ENCODE measurements at regions of chr9 and their contacts with region 1.

Region 1: GRCh38 chr9:32741706-32742105 is 41.6 kb upstream of the TMEM215 start:
- DNase-seq: peak; percentile 55
- H3K4me3 ChIP-seq: no peak overlapping the region
- H3K27ac ChIP-seq: peak overlapping the region; percentile 16
- H3K4me1 ChIP-seq: peaks cover 32% of the 10 kb centered on the region
- H3K27me3 ChIP-seq: no peaks in the 10 kb centered on the region
- CTCF ChIP-seq: no peak

Region 2: DNA sequence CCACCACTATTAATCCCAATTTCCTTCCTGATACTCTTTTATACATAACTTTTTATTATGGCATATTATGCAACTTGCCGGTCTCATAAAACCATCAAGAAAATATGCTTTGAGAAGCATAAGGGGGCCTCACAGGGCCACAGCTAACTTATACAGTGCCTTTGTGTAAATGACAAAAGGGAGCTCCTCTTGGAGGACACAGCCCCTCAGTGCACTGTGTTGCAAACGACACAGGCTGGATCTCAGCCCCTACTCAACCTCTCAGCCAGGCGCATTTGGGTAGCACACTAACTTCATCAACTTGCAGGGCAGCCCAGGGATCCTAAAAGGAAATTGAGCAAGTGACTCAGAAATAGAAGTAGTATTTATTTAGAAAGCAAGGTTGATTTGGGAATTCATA is 251.1 kb before region 1 on chr9:
- CTCF ChIA-PET with region 1: no interaction called
- dilution Hi-C with region 1: no loop called
- in situ Hi-C with region 1: no loop called
- intact Hi-C with region 1: no loop called
- DNase-seq: no peak
- H3K4me3 ChIP-seq: no peak overlapping the region
- H3K27ac ChIP-seq: no peak overlapping the region
- H3K4me1 ChIP-seq: no peaks in the 10 kb centered on the region
- H3K27me3 ChIP-seq: no peaks in the 10 kb centered on the region
- CTCF ChIP-seq: no peak

Region 3: DNA sequence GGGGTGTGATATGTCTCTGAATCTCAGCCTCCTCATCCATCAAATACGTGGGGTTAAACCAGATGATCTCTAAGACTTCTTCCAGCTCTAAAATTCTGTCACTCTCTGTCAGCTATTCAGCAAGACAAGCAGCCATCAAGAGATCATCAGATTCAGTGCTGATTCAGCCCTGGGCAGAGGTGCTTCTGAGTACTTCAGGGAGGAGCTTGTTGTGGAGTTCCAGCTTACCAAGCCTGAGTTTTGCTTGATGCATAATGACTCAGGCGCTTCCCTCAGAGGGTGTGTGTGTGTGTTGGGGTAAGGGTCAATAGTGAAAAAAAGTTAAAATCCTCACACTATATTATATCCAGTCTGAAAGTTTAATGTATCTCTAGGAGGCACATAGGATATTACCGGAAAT is 76.6 kb before region 1 on chr9:
- CTCF ChIA-PET with region 1: no interaction called
- dilution Hi-C with region 1: loop called (anchors 5 kb)
- in situ Hi-C with region 1: no loop called
- intact Hi-C with region 1: no loop called
- DNase-seq: peak; percentile 80
- H3K4me3 ChIP-seq: no peak overlapping the region
- H3K27ac ChIP-seq: no peak overlapping the region
- H3K4me1 ChIP-seq: no peaks in the 10 kb centered on the region
- H3K27me3 ChIP-seq: peaks cover 3% of the 10 kb centered on the region
- CTCF ChIP-seq: no peak

Measured in mammary epithelial cell (primary cell).